Activated CD4-positive, alpha-beta T cell treated with anti-CD3 and anti-CD28 coated beads, Interleukin-2, amount 10 ng/mL, durations not matched to agents 7 days and 5 days (primary cell): ENCODE measurements at regions of chr14 and their contacts with region 1.

Region 1: GRCh38 chr14:35374273-35374681 is 30.3 kb downstream of the NFKBIA start:
- DNase-seq: no peak
- H3K4me3 Mint-ChIP-seq: no peak overlapping the region
- H3K27ac Mint-ChIP-seq: no peak overlapping the region
- H3K4me1 Mint-ChIP-seq: peaks cover 3% of the 10 kb centered on the region
- H3K27me3 Mint-ChIP-seq: no peaks in the 10 kb centered on the region

Region 2: DNA sequence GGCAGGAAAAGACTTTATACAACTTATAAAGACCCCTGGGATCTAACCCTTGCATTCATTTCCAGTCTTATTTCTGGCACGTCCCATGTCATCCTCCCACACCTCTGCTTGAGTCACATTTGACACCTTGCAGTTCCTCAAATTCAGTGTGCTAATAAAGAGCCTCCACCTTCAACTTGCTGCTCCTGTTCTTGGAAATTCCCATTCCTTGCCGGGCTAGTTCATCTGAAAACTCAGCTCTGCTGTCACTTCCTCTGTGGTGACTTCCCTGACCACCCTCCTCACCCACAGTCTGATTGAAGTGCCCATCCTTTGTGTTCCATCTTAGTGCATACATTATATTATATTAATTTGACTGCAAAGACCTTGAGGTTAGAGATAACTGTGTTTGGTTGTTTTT is 119.5 kb before region 1 on chr14:
- CTCF ChIA-PET with region 1: no interaction called
- POLR2A ChIA-PET with region 1: no interaction called
- DNase-seq: no peak
- H3K4me3 Mint-ChIP-seq: no peak overlapping the region
- H3K27ac Mint-ChIP-seq: no peak overlapping the region
- H3K4me1 Mint-ChIP-seq: peaks cover 17% of the 10 kb centered on the region
- H3K27me3 Mint-ChIP-seq: no peaks in the 10 kb centered on the region

Region 3: GRCh38 chr14:35343702-35344101 is 30.6 kb before region 1 on chr14:
- CTCF ChIA-PET with region 1: no interaction called
- POLR2A ChIA-PET with region 1: no interaction called
- DNase-seq: no peak
- H3K4me3 Mint-ChIP-seq: no peak overlapping the region
- H3K27ac Mint-ChIP-seq: no peak overlapping the region
- H3K4me1 Mint-ChIP-seq: peaks cover 29% of the 10 kb centered on the region
- H3K27me3 Mint-ChIP-seq: no peaks in the 10 kb centered on the region

Region 4: DNA sequence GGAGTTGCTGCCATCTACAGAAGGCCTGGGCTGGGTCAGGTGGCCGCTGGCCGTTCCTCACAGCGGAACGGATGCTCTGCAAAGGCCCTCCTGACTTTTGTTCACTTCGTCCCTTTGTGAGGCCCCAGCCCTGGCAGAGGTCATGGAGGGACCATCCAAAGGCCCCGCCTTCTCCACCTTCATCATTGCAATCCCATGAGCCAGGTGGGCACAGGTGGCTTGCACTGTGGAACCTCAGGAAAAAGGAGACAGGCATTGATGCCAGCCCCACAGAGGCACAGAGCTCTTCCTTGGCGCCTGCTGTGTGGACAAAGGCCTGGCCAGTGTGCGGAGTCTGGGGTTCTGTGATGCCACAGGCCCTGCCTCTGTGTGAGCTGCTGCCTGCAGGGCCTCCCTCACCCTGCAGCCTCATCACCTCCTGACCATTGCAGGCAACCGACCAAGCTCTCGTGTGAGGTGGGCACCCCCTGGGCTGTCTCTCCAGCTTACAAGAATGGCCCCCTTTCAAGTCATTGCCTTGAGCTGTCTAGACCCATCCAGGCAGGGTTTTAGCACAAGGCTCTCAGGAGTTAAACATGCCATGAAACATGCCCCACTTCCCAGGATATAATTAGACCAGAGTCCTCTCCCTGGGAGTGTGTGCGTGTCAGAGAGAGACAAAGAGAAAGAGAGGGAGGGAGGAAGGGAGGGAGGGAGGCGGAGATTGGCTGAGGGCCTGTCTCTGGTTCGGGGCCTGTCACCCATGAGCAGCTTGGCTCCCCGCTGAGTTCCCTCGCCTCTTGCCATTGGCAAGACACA is 11.0 kb after region 1 on chr14:
- CTCF ChIA-PET with region 1: interaction called, 11 read pairs
- POLR2A ChIA-PET with region 1: no interaction called
- DNase-seq: no peak
- H3K4me3 Mint-ChIP-seq: no peak overlapping the region
- H3K27ac Mint-ChIP-seq: no peak overlapping the region
- H3K4me1 Mint-ChIP-seq: no peaks in the 10 kb centered on the region
- H3K27me3 Mint-ChIP-seq: no peaks in the 10 kb centered on the region